Activated CD4-positive, alpha-beta memory T cell treated with anti-CD3 and anti-CD28 coated beads for 36 hours (primary cell): ENCODE measurements at regions of chr5 and their contacts with region 1.

Region 1: DNA sequence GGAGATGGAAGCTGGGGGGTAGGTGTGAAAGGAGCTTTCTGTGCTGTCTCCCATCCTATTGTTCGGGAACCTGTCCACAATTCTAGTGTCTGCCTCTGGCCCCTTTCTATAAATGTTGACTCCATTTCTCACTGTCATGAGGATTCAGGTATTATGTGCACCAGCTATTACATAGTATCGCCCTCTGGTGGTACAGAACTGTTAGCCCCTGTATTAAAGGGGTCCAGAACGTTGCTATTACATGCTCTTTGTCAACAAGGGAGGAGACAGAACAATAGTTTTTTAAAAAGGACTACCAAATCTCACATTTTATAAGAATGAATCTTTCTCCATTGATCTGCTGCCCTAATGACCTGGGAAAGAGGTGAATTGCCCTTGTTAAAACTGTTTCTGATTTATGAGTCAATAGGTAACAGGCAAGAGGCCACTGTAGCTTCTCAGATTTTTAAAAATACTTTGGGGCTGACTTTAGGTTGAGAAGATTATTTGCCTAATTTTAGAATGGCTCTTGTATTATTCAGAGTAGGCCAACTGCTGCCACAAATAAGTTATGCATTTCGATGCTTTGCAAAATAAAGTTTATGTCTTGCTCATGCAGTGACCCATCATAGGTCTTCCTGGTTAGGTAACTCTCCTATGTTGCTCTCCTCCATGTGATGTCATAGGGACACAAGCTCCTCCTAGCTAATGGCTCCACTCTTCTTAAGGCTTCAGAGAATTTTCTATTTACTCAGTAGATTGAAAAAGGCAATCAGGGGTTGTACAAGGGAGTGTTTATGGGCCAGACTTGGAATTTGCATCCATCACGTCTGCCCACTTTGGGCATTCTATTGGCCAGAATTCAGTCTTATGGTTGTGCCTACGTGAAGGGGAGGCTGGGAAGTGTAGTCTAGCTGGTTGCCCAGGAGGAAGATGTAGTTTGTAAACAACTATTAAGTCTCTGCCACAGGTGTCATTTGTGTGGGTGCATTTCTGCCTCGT is 20.8 kb downstream of the DCANP1 start:
- DNase-seq: no peak
- H3K4me3 Mint-ChIP-seq: no peak overlapping the region
- H3K27ac Mint-ChIP-seq: no peak overlapping the region
- H3K4me1 Mint-ChIP-seq: peaks cover 2% of the 10 kb centered on the region
- H3K27me3 Mint-ChIP-seq: peaks cover 25% of the 10 kb centered on the region

Region 2: DNA sequence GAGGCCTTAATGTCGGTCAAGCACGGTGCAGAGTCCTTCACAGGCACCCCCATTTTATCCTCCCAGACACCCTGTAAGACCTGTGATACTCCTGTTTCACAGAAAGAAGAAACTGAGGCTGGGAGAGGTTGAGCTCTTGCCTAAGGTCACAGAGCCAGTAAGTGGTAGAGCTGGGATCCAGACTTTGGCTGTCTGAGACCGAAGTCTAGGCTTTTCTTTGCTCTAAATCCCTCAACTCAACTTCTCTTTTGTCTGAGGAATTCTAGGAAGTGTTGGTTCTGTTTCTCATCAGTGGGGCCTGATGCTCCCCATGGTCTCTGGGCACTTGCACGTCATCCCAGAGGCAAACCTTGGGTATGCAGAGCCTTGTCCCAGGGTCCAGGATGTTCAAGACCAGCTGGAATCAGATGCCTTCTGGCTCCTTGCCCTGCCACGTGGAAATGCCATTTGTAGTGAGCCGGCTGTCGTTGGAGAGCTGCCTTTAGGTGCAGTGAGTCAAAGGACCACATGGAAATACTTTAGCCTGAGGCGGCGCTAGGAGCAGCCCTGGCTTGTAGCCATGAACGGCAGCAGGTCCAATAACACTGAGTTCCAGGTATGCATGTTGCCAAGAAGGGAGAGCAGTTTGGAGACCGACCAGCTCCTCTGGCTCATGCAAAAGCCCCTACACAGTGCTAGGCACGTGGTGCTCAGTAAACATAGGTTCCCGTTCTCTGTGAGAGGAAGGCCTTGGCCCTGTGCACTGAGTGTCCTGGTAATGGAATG is 11.6 kb after region 1 on chr5:
- CTCF ChIA-PET with region 1: interaction called, 10 read pairs
- POLR2A ChIA-PET with region 1: no interaction called
- intact Hi-C with region 1: no loop called
- DNase-seq: no peak
- H3K4me3 Mint-ChIP-seq: no peak overlapping the region
- H3K27ac Mint-ChIP-seq: no peak overlapping the region
- H3K4me1 Mint-ChIP-seq: no peaks in the 10 kb centered on the region
- H3K27me3 Mint-ChIP-seq: peaks cover 4% of the 10 kb centered on the region

Region 3: GRCh38 chr5:135457424-135458071 is 31.2 kb after region 1 on chr5:
- CTCF ChIA-PET with region 1: interaction called, 15 read pairs
- POLR2A ChIA-PET with region 1: no interaction called
- intact Hi-C with region 1: no loop called
- DNase-seq: peak; percentile 75
- H3K4me3 Mint-ChIP-seq: no peak overlapping the region
- H3K27ac Mint-ChIP-seq: no peak overlapping the region
- H3K4me1 Mint-ChIP-seq: no peaks in the 10 kb centered on the region
- H3K27me3 Mint-ChIP-seq: peaks cover 14% of the 10 kb centered on the region